GM10248 (cell line): ENCODE measurements at regions of chr7 and their contacts with region 1.

Region 1: GRCh38 chr7:150753826-150754603 is 16.8 kb downstream of the GIMAP5 start:
- DNase-seq: peak; percentile 38
- CTCF ChIP-seq: peak; percentile 38

Region 2: GRCh38 chr7:150448789-150449147 is 305.2 kb before region 1 on chr7:
- CTCF ChIA-PET with region 1: interaction called, 31 read pairs
- POLR2A ChIA-PET with region 1: no interaction called
- DNase-seq: peak; percentile 88
- CTCF ChIP-seq: peak; percentile 93